ENCODE measurements at regions of chr3 and their contacts with region 1.

Region 1: DNA sequence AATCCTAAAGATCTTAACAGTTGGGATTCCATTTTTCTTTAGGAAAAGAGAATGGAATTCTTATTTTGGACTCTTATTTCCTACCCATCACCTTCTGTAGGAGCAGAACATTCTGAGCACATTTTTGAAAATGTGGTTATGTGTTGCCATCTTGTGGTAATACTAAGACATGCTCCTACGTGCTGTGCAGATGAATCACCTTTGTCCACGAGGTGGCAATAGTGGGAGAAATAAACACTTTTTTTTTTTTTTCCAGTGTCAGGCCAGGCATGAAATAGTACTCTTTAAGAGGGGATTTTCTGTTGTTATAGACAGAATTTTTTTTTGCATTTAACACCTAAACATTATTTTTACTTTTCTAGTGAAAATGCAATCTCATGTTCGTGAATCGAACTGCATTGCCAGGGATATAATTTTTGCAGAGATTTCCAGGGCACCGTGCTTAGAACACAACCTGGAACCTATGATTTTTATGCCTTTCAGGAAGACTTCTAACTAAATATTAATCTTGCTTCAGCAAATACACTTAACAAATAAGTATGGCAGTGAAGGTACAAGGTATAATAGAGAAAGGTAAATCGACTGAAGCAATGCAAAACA is 196.6 kb downstream of the GAP43 start:
- DNase-seq: peak; percentile 42
- H3K4me3 Mint-ChIP-seq: no peak overlapping the region
- H3K27ac Mint-ChIP-seq: no peak overlapping the region
- H3K4me1 Mint-ChIP-seq: peaks cover 2% of the 10 kb centered on the region
- H3K27me3 Mint-ChIP-seq: peaks cover 3% of the 10 kb centered on the region

Region 2: DNA sequence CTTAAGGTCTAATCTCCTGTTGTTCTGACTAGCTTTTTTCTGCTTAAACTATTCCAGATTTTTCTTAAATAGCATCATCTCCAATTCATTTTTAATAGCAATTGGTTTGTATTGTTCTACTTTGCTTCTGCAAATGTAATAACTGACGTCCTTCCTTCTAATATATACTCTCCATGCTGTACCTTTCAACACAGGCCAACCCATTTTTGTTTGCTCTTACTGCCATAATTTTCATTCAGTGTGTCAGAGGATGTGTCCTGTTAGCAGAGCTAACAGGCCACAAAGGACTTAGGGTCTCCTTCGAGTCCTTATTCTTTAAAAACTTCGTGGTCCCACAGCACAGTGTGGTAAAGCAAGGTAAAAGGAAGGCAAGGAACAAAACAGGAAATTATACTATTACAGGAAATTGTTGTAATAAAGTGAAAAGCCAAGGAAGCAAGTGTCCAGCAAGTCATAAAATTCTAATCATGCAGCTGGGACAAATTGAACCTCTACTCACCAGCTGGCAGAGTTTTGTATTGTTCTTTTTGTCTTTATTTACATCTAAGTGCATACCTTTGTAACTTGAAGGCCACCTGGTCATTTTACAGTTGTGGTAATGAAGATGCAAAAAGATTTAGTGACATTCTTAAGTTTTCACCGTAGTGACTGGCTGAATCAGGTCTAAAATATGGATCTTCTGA is 607.9 kb before region 1 on chr3:
- intact Hi-C with region 1: loop called (anchors 5 kb)
- DNase-seq: no peak
- H3K4me3 Mint-ChIP-seq: no peak overlapping the region
- H3K27ac Mint-ChIP-seq: no peak overlapping the region
- H3K4me1 Mint-ChIP-seq: no peaks in the 10 kb centered on the region
- H3K27me3 Mint-ChIP-seq: no peaks in the 10 kb centered on the region

Region 3: GRCh38 chr3:115658337-115659181 is 161.3 kb before region 1 on chr3:
- intact Hi-C with region 1: loop called (anchors 10 kb)
- DNase-seq: peak; percentile 69
- H3K4me3 Mint-ChIP-seq: peak overlapping the region; percentile 86
- H3K27ac Mint-ChIP-seq: peak overlapping the region; percentile 90
- H3K4me1 Mint-ChIP-seq: peaks cover 32% of the 10 kb centered on the region
- H3K27me3 Mint-ChIP-seq: peaks cover 9% of the 10 kb centered on the region

Region 4: GRCh38 chr3:115834068-115834467 is 14.2 kb after region 1 on chr3:
- intact Hi-C with region 1: no loop called
- DNase-seq: no peak
- H3K4me3 Mint-ChIP-seq: no peak overlapping the region
- H3K27ac Mint-ChIP-seq: no peak overlapping the region
- H3K4me1 Mint-ChIP-seq: no peaks in the 10 kb centered on the region
- H3K27me3 Mint-ChIP-seq: peaks cover 12% of the 10 kb centered on the region

Region 5: GRCh38 chr3:117735481-117736101 is 1915.7 kb after region 1 on chr3:
- intact Hi-C with region 1: no loop called
- DNase-seq: no peak
- H3K4me3 Mint-ChIP-seq: no peak overlapping the region
- H3K27ac Mint-ChIP-seq: no peak overlapping the region
- H3K4me1 Mint-ChIP-seq: no peaks in the 10 kb centered on the region
- H3K27me3 Mint-ChIP-seq: no peaks in the 10 kb centered on the region